ENCODE measurements at regions of chr19 and their contacts with region 1.

Region 1: DNA sequence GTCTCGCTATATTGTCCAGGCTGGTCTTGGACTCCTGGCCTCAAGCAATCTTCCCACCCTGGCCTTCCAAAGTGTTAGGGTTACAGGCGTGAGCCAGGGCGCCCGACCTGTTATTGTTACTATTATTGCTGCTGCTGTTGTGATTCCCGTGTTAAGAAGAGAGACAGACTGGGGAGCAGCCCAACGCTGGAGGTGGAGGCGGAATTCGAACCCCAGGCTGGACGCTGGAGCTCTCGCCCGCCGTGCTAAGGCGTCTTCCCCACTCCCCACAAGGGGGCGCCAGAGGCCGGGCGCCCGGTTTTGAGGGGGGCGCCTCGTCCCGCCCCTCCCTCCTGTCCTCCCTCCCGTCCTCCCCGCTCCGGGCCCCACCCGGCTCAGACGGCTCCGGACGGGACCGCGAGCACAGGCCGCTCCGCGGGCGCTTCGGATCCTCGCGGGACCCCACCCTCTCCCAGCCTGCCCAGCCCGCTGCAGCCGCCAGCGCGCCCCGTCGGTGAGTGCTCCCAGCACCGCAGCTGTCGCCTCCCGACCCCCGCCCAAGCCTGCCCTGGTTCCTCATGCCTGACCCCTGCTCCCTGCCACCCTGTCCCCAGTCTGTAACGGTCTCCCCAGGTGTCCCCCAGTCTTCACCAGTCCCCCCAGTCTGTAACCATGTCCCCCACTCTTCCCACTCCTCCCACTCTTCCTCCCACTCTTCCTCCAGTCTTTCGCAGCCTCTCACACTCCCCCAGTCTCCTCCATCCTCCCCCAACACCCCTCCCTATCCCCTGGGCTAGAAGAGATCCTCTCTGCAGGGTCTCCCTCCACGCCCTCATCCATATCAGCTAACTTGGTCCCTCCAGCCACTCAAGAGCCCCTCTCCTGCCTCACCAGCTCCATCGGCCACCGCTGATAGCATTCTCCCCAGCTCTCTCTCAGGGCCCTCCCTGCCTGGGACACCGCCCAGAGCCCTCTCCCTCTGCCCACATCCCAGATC is at the start of gene EHD2:
- DNase-seq: peak; percentile 69 to 84
- ATAC-seq: peak; percentile 83 to 92
- H3K4me3 ChIP-seq: peak within 1 kb of the TSS; percentile 89
- H3K27ac ChIP-seq: peak within 1 kb of the TSS; percentile 97 to 99
- H3K4me1 ChIP-seq: peaks cover 4% of the 10 kb centered on the region
- CTCF ChIP-seq: peak; percentile 99
- EP300 ChIP-seq: no peak
- POLR2A ChIP-seq: peak; percentile 82
- RAD21 ChIP-seq: peak; percentile 99 to 100
- polyA plus RNA-seq, gene EHD2: 32.3 and 36.9 TPM in 2 replicates

Region 2: DNA sequence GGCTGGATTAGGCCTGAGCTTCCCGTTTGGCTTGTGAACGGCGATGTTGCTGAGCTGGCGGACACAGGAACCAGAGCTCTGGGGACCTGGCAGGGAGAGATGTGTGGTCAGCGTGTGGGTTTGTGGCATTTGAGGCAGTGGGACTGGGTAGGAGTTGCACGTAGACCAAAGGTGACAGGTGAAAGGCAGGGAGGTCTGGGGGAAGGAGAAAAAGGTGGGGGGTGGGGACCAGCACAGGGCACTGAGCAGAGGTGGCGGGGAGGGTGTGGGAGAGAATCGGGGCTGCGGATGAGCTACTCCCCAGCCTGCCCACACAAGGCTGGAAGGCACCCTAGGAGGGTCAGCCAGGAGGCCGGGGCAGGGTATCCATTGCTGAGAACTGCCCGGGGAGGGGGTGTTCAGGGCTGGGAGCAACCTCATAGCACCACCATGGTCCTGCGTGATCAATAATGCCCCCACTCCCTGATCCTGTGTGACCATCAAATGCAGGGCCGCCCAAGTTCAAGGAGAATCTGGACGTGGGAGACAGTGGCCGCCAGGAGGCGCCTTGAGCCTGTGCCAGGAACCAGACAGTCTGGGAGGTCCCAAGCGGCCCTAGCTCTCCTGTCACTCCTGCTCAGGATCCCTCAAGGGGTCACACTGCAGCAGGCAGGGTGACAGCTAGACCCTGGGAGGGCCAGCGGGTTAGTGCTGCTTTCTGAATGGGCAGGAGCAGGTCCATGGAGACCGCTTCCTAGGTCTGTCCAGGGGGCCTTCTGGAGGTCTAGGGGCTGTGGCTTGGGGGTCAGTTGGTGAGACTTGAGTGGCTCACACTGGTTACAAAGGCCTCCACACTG is 52.4 kb after region 1 on chr19:
- CTCF ChIA-PET with region 1: interaction called, 1,389 read pairs
- POLR2A ChIA-PET with region 1: no interaction called
- DNase-seq: peak; percentile 58 to 74
- ATAC-seq: peak; percentile 66 to 85
- H3K4me3 ChIP-seq: no peak overlapping the region
- H3K27ac ChIP-seq: no peak overlapping the region
- H3K4me1 ChIP-seq: no peaks in the 10 kb centered on the region
- CTCF ChIP-seq: peak; percentile 83
- EP300 ChIP-seq: no peak
- POLR2A ChIP-seq: no peak
- RAD21 ChIP-seq: peak; percentile 61 to 84

Region 3: GRCh38 chr19:47778089-47778953 is 65.0 kb after region 1 on chr19 and contains the start of gene SELENOW:
- CTCF ChIA-PET with region 1: interaction called, 14 read pairs
- POLR2A ChIA-PET with region 1: no interaction called
- DNase-seq: peak; percentile 83 to 90
- ATAC-seq: peak; percentile 88 to 95
- H3K4me3 ChIP-seq: peak within 1 kb of the TSS; percentile 79
- H3K27ac ChIP-seq: peak within 1 kb of the TSS; percentile 90 to 94
- H3K4me1 ChIP-seq: peaks cover 16% of the 10 kb centered on the region
- CTCF ChIP-seq: no peak
- EP300 ChIP-seq: no peak
- POLR2A ChIP-seq: peak; percentile 99
- RAD21 ChIP-seq: no peak
- polyA plus RNA-seq, gene SELENOW: 114 and 157 TPM in 2 replicates

Region 4: GRCh38 chr19:47819858-47820257 is 106.5 kb after region 1 on chr19:
- CTCF ChIA-PET with region 1: no interaction called
- POLR2A ChIA-PET with region 1: no interaction called
- DNase-seq: no peak
- ATAC-seq: 0 out of 6 replicates have a peak, but pooled peaks of 1 of the 2 experiments have one; percentile 6
- H3K4me3 ChIP-seq: no peak overlapping the region
- H3K27ac ChIP-seq: no peak overlapping the region
- H3K4me1 ChIP-seq: no peaks in the 10 kb centered on the region
- CTCF ChIP-seq: no peak
- EP300 ChIP-seq: no peak
- POLR2A ChIP-seq: no peak
- RAD21 ChIP-seq: no peak

Region 5: DNA sequence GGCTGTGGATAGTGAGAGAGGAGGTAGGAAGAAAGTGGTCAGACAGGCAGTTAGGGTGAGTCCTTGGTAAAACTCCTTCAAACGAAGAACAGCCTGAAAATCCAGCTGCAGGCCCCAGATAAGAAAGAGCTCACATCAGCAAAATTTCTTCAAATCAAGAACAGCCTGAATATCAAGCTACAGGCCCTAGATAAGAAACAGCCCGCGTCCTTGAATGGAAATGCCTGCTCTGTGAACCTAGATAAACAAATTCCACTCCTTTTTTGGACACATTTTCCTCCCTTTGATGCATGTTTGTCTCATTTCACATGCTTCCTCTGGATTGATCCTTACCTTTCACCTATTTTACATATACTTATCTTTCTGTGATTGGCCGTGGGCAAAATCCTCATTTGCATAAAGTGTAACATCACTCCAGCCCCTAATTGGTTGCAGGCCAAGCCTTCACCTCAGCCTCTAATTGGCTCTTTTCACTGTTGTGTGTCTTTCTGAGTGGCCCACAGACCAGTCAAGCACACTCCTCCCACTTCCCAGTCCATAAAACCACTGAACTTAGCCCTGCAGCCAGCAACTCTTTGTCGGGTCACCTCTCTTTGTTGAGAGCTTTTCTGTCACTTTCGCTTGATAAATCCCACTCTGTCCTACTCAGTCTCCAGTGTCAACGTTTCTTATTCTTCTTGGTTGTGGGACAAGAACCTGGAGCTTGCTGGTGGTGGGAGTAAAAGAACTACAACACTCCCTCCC is 178.8 kb after region 1 on chr19:
- CTCF ChIA-PET with region 1: no interaction called
- POLR2A ChIA-PET with region 1: no interaction called
- DNase-seq: no peak
- ATAC-seq: 0 out of 6 replicates have a peak, but pooled peaks of 1 of the 2 experiments have one; percentile 24
- H3K4me3 ChIP-seq: no peak overlapping the region
- H3K27ac ChIP-seq: no peak overlapping the region
- H3K4me1 ChIP-seq: no peaks in the 10 kb centered on the region
- CTCF ChIP-seq: no peak
- EP300 ChIP-seq: no peak
- POLR2A ChIP-seq: no peak
- RAD21 ChIP-seq: no peak

Measured in A549 (cell line).